Activated CD4-positive, alpha-beta memory T cell treated with anti-CD3 and anti-CD28 coated beads for 36 hours (primary cell): ENCODE measurements at regions of chr18 and their contacts with region 1.

Region 1: GRCh38 chr18:12376718-12377555 is at the start of gene AFG3L2:
- DNase-seq: peak; percentile 100
- H3K4me3 Mint-ChIP-seq: peak within 1 kb of the TSS; percentile 89
- H3K27ac Mint-ChIP-seq: peak within 1 kb of the TSS; percentile 87
- H3K4me1 Mint-ChIP-seq: peaks cover 44% of the 10 kb centered on the region
- H3K27me3 Mint-ChIP-seq: no peaks in the 10 kb centered on the region
- total RNA-seq, gene AFG3L2: 45.2 to 48.8 TPM

Region 2: DNA sequence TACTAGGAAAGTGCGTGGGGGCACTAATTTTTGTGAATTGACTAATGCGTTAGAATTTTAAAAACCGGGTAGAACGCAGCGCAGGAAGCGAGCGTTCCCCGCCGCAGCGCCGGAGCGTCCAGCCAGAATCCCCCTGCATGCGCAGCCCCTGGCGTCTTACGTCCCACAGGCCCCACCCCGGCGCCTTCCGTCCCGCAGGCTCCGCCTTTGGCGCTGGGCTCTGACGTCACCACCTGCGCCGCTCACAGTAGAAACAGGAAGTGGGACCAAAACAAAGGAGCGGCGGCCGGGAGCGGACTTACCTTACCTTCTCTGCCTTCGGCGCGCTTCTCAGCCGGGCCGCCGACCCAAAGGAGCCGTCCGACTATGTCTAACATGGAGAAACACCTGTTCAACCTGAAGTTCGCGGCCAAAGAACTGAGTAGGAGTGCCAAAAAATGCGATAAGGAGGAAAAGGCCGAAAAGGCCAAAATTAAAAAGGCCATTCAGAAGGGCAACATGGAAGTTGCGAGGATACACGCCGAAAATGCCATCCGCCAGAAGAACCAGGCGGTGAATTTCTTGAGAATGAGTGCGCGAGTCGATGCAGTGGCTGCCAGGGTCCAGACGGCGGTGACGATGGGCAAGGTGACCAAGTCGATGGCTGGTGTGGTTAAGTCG is 525.7 kb before region 1 on chr18 and contains the start of gene CHMP1B:
- CTCF ChIA-PET with region 1: no interaction called
- POLR2A ChIA-PET with region 1: no interaction called
- intact Hi-C with region 1: loop called (anchors 1 kb)
- DNase-seq: peak; percentile 98
- H3K4me3 Mint-ChIP-seq: peak within 1 kb of the TSS; percentile 100
- H3K27ac Mint-ChIP-seq: peak within 1 kb of the TSS; percentile 95
- H3K4me1 Mint-ChIP-seq: peaks cover 33% of the 10 kb centered on the region
- H3K27me3 Mint-ChIP-seq: no peaks in the 10 kb centered on the region
- total RNA-seq, gene CHMP1B: 21.2 to 22.0 TPM

Region 3: GRCh38 chr18:11972371-11973174 is 404.4 kb before region 1 on chr18:
- CTCF ChIA-PET with region 1: no interaction called
- POLR2A ChIA-PET with region 1: no interaction called
- intact Hi-C with region 1: no loop called
- DNase-seq: no peak
- H3K4me3 Mint-ChIP-seq: no peak overlapping the region
- H3K27ac Mint-ChIP-seq: no peak overlapping the region
- H3K4me1 Mint-ChIP-seq: no peaks in the 10 kb centered on the region
- H3K27me3 Mint-ChIP-seq: peaks cover 3% of the 10 kb centered on the region

Region 4: GRCh38 chr18:12408247-12408869 is 31.4 kb after region 1 on chr18:
- CTCF ChIA-PET with region 1: no interaction called
- POLR2A ChIA-PET with region 1: interaction called, 10 read pairs
- intact Hi-C with region 1: loop called (anchors 1 kb)
- DNase-seq: no peak
- H3K4me3 Mint-ChIP-seq: peak overlapping the region; percentile 63
- H3K27ac Mint-ChIP-seq: no peak overlapping the region
- H3K4me1 Mint-ChIP-seq: peaks cover 25% of the 10 kb centered on the region
- H3K27me3 Mint-ChIP-seq: peaks cover 26% of the 10 kb centered on the region

Region 5: GRCh38 chr18:12702221-12703095 is 325.5 kb after region 1 on chr18 and contains the starts of genes CEP76 and PSMG2:
- CTCF ChIA-PET with region 1: interaction called, 6 read pairs
- POLR2A ChIA-PET with region 1: interaction called, 22 read pairs
- intact Hi-C with region 1: loop called (anchors 1 kb)
- DNase-seq: peak; percentile 88
- H3K4me3 Mint-ChIP-seq: peak within 1 kb of the TSS; percentile 96
- H3K27ac Mint-ChIP-seq: peak within 1 kb of the TSS; percentile 98
- H3K4me1 Mint-ChIP-seq: peaks cover 35% of the 10 kb centered on the region
- H3K27me3 Mint-ChIP-seq: no peaks in the 10 kb centered on the region
- total RNA-seq, gene CEP76: 14.4 to 15.0 TPM
- total RNA-seq, gene PSMG2: 112 to 119 TPM

Region 6: DNA sequence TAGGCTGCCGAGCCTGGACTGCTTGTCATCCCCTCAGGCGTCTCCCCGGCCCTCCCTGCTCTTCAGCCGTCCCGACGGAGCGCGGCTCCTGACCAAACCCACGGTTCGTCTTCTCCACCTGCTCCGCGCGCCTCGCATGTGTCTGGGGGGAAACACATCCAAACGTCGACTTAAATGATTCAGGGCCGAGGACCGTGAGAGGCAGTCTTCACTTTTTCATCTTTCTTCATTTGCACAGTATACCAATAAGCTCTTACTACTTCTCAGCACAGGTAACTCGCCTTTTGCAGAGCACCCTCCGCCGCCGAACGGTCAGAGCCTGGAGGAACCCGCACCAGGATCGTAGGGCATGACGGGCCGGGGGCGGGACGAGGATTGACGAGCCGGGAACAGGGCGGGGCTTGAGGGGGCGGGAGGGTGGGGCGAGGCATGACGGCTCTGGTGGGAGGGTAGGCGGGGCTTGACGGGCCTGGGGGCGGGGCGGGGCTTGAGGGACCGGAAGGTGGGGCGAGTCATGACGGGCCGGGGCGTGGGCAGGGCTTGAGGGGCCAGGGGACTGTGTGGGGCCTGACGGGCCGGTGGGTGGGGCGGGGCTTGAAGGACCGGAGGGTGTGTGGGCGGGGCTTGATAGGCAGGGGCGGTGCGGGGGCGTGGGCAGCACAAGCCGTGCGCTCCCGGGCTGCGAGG is 570.6 kb after region 1 on chr18 and contains the start of gene SEH1L:
- CTCF ChIA-PET with region 1: no interaction called
- POLR2A ChIA-PET with region 1: interaction called, 5 read pairs
- intact Hi-C with region 1: loop called (anchors 1 kb)
- DNase-seq: peak; percentile 100
- H3K4me3 Mint-ChIP-seq: peak within 1 kb of the TSS; percentile 95
- H3K27ac Mint-ChIP-seq: peak within 1 kb of the TSS; percentile 97
- H3K4me1 Mint-ChIP-seq: peaks cover 45% of the 10 kb centered on the region
- H3K27me3 Mint-ChIP-seq: no peaks in the 10 kb centered on the region
- total RNA-seq, gene SEH1L: 90.3 to 92.5 TPM

Region 7: GRCh38 chr18:13726232-13726971 is 1349.5 kb after region 1 on chr18 and contains the starts of genes FAM210A and RNMT:
- CTCF ChIA-PET with region 1: no interaction called
- POLR2A ChIA-PET with region 1: interaction called, 4 read pairs
- intact Hi-C with region 1: loop called (anchors 1 kb)
- DNase-seq: peak; percentile 96
- H3K4me3 Mint-ChIP-seq: peak within 1 kb of the TSS; percentile 83
- H3K27ac Mint-ChIP-seq: peak within 1 kb of the TSS; percentile 89
- H3K4me1 Mint-ChIP-seq: peaks cover 61% of the 10 kb centered on the region
- H3K27me3 Mint-ChIP-seq: no peaks in the 10 kb centered on the region
- total RNA-seq, gene FAM210A: 24.9 to 29.4 TPM
- total RNA-seq, gene RNMT: 41.2 to 43.6 TPM